Endothelial cell of umbilical vein (primary cell): ENCODE measurements at regions of chr17 and their contacts with region 1.

Region 1: GRCh38 chr17:41966463-41967140 is at the start of gene CNP:
- DNase-seq: peak; percentile 91
- H3K4me3 ChIP-seq: peak within 1 kb of the TSS; percentile 74 to 93 (median 80)
- H3K27ac ChIP-seq: peak within 1 kb of the TSS; percentile 51
- H3K4me1 ChIP-seq: peaks cover 18% of the 10 kb centered on the region
- H3K27me3 ChIP-seq: no peaks in the 10 kb centered on the region
- CTCF ChIP-seq: no peak
- POLR2A ChIP-seq: peak; percentile 96
- total RNA-seq, gene CNP: 84.9 and 88.3 TPM in 2 replicates

Region 2: GRCh38 chr17:41930009-41930832 is 36.4 kb before region 1 on chr17 and contains the start of gene ODAD4:
- CTCF ChIA-PET with region 1: interaction called, 13 read pairs
- POLR2A ChIA-PET with region 1: no interaction called
- dilution Hi-C with region 1: no loop called
- intact Hi-C with region 1: no loop called
- DNase-seq: peak; percentile 99
- H3K4me3 ChIP-seq: peak within 1 kb of the TSS in 2 of 3 experiments; percentile 25 to 51
- H3K27ac ChIP-seq: peak within 1 kb of the TSS; percentile 50
- H3K4me1 ChIP-seq: peaks cover 8% of the 10 kb centered on the region
- H3K27me3 ChIP-seq: peaks cover 0 to 3% of the 10 kb centered on the region in 2 experiments
- CTCF ChIP-seq: peak; percentile 44 to 59
- POLR2A ChIP-seq: peak; percentile 84
- total RNA-seq, gene ODAD4: 0.60 and 1.0 TPM in 2 replicates

Region 3: GRCh38 chr17:42019509-42020404 is 53.2 kb after region 1 on chr17 and contains the start of gene NKIRAS2:
- CTCF ChIA-PET with region 1: interaction called, 7 read pairs
- POLR2A ChIA-PET with region 1: interaction called, 3 read pairs
- dilution Hi-C with region 1: no loop called
- intact Hi-C with region 1: loop called (anchors 5 kb)
- DNase-seq: peak; percentile 89
- H3K4me3 ChIP-seq: peak within 1 kb of the TSS; percentile 89 to 96 (median 93)
- H3K27ac ChIP-seq: peak within 1 kb of the TSS; percentile 86
- H3K4me1 ChIP-seq: peaks cover 24% of the 10 kb centered on the region
- H3K27me3 ChIP-seq: no peaks in the 10 kb centered on the region
- CTCF ChIP-seq: peak; percentile 91 to 96
- POLR2A ChIP-seq: peak; percentile 92
- total RNA-seq, gene NKIRAS2: 57.3 and 60.4 TPM in 2 replicates

Region 4: DNA sequence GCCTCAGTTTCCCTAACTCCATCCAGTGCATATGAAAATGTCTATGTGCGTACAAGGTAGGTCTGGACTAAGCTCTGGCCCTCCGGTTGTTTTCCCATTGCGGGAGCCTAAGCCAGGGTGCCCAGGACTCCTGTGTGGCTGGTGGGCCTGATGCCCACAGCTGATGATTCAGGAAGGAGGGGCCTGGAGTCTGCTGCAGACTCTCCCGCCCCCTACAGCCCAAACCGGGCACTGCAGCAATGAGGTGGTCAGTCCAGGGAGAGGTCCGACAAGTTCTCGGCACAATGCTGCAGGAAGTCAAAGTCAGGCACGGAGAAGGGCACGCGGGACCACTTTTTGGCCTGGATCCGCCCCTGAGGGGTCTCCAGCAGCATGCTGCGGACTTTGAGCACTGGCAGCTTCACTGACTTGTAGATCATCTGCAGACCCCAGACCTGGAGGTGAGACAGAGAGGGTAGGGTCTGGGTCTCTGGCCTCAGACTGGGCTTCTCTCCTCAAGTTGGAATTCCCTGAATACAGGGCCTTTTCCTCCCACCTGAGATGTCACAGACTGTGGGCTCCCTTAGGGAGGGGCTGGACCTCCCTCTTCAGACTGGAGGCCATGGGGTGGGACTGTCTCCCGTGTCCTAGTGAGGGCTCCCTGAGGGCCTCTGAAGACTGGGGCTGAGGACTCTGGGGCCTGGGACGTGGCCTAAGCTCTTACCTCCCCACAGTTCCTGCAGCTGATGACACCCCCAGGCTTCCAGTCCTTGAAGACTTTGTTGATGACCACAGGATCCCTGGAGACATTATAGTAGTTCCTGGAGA is 135.1 kb after region 1 on chr17:
- CTCF ChIA-PET with region 1: interaction called, 36 read pairs
- POLR2A ChIA-PET with region 1: interaction called, 4 read pairs
- dilution Hi-C with region 1: loop called (anchors 25 kb)
- intact Hi-C with region 1: loop called (anchors 1 kb)
- DNase-seq: peak; percentile 78
- H3K4me3 ChIP-seq: no peak overlapping the region
- H3K27ac ChIP-seq: no peak overlapping the region
- H3K4me1 ChIP-seq: peaks cover 5% of the 10 kb centered on the region
- H3K27me3 ChIP-seq: peaks cover 14 to 15% of the 10 kb centered on the region in 2 experiments
- CTCF ChIP-seq: peak; percentile 96 to 97
- POLR2A ChIP-seq: no peak

Region 5: DNA sequence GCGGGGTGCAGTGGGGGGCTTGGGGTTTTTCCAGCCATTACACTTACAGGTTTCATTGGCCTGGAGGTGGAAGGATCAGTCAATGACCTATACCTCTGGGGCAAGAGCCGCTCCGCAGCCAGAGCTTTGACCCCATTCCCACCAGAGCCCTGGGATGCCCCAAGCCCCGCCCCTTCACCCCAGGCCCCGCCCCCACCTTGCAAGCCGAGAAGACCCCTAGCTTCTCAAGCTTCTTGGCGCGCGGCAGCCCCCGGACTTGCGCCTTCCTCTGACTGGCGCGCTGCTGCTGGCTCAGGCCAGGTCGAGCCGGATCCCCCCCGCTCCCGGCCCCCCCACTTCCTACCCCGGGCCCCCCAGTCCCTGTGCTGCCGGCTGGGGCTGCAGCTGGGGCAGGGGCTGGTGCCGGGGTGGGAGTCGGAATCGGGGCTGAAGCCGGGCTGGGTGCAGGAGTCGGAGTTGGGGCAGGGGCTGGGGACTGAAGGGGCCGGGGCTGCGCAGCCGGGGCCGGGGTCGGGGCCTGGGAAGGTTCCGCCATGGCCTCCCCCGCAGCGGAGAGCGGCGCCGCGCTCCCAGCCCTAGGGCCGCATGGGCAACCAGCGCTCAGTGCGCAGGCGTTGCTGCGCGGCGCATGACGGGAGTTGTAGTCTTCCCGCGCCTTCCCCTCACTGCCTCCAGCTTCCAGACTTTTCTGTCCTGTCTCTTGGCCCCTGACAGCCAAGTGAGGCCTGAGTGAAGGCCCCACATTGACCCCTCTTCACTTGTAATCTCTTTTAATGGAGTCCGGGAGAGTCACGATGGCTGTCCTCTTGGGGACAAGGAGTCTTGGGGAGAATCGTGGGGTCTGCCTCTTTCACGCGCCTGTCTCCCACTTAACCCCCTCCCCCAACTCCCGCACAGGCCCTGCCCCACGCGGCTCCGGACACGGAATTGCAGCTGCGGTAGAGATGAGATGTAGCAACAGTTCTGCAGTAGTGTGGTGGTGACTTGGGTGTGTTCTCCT is 154.5 kb after region 1 on chr17 and contains the start of gene KAT2A:
- CTCF ChIA-PET with region 1: interaction called, 74 read pairs
- POLR2A ChIA-PET with region 1: no interaction called
- dilution Hi-C with region 1: loop called (anchors 25 kb)
- intact Hi-C with region 1: loop called (anchors 1 kb)
- DNase-seq: peak; percentile 79
- H3K4me3 ChIP-seq: peak within 1 kb of the TSS in 2 of 3 experiments; percentile 62 to 70
- H3K27ac ChIP-seq: no peak within 1 kb of the TSS
- H3K4me1 ChIP-seq: peaks cover 5% of the 10 kb centered on the region
- H3K27me3 ChIP-seq: no peaks in the 10 kb centered on the region
- CTCF ChIP-seq: no peak
- POLR2A ChIP-seq: peak; percentile 84
- total RNA-seq, gene KAT2A: 31.3 and 33.4 TPM in 2 replicates